Activated T-helper 1 cell treated with anti-CD3 and anti-CD28 coated beads, Interleukin-12 subunit alpha, Interleukin-12 subunit beta, Interleukin-2, Interleukin-4 antibody, amounts not matched to agents 30 ng/mL and 10 ng/mL and 1 ng/mL, durations not matched to agents 14 hours and 24 hours and 36 hours (primary cell): ENCODE measurements at regions of chr10 and their contacts with region 1.

Region 1: GRCh38 chr10:100743626-100744135 is 1.7 kb upstream of the PAX2 start:
- DNase-seq: peak; percentile 19
- H3K4me3 Mint-ChIP-seq: no peak overlapping the region
- H3K27ac Mint-ChIP-seq: peak overlapping the region; percentile 55
- H3K4me1 Mint-ChIP-seq: peaks cover 15% of the 10 kb centered on the region
- H3K27me3 Mint-ChIP-seq: peaks cover 77% of the 10 kb centered on the region

Region 2: GRCh38 chr10:100535715-100536353 is 207.8 kb before region 1 on chr10 and contains the start of gene HIF1AN:
- intact Hi-C with region 1: no loop called
- DNase-seq: peak; percentile 90
- H3K4me3 Mint-ChIP-seq: no peak within 1 kb of the TSS
- H3K27ac Mint-ChIP-seq: no peak within 1 kb of the TSS
- H3K4me1 Mint-ChIP-seq: peaks cover 16% of the 10 kb centered on the region
- H3K27me3 Mint-ChIP-seq: no peaks in the 10 kb centered on the region
- total RNA-seq, gene HIF1AN: 46.5 and 54.1 TPM in 2 replicates

Region 3: DNA sequence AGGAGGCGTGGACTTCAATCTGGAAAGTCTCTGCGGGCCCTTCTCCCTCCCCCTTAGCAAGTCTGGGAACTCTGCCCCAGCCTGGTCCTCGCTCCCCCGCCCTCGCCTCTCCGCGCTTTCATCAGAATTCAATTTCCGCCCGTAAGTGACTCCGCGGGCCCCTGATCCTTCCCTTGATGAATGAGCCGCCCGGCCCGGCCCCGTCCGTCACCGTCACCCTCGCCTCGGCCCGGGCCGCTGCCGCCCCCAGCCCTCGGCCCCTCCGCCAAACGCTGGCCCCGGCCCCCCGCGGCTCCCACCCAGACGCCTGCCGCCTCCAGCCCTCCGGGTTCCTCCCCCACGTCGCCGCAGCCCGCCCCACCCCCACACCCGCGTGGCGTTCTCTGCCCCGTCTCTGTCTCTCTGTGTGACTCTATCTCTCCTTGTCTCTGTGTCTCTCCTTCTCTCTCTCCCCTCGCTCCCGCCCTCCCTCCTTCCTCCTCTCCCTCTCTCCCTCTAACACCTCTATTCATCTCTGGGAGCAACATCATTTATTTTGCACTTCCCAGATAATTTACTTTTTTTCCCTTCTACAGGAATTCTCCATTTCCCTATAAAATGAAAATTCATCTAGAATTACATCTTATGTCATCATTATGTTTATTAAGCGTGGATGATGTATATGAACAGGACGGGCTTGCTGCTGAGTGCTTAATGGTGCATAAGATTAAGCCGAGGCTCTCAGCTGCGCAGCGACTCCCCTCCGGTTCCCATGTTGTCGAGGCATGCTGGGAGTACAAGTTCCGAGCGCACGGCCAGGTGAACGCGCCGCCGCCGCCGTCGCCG is 89.5 kb before region 1 on chr10:
- intact Hi-C with region 1: loop called (anchors 5 kb)
- DNase-seq: no peak
- H3K4me3 Mint-ChIP-seq: peak overlapping the region; percentile 57
- H3K27ac Mint-ChIP-seq: no peak overlapping the region
- H3K4me1 Mint-ChIP-seq: peaks cover 20% of the 10 kb centered on the region
- H3K27me3 Mint-ChIP-seq: peaks cover 63% of the 10 kb centered on the region

Region 4: GRCh38 chr10:100715445-100716385 is 28.0 kb before region 1 on chr10:
- intact Hi-C with region 1: loop called (anchors 2 kb)
- DNase-seq: no peak
- H3K4me3 Mint-ChIP-seq: no peak overlapping the region
- H3K27ac Mint-ChIP-seq: no peak overlapping the region
- H3K4me1 Mint-ChIP-seq: peaks cover 6% of the 10 kb centered on the region
- H3K27me3 Mint-ChIP-seq: peaks cover 81% of the 10 kb centered on the region

Region 5: GRCh38 chr10:100817268-100817839 is 73.7 kb after region 1 on chr10:
- intact Hi-C with region 1: no loop called
- DNase-seq: no peak
- H3K4me3 Mint-ChIP-seq: no peak overlapping the region
- H3K27ac Mint-ChIP-seq: no peak overlapping the region
- H3K4me1 Mint-ChIP-seq: no peaks in the 10 kb centered on the region
- H3K27me3 Mint-ChIP-seq: peaks cover 37% of the 10 kb centered on the region

Region 6: GRCh38 chr10:100827819-100828737 is 84.4 kb after region 1 on chr10:
- intact Hi-C with region 1: loop called (anchors 2 kb)
- DNase-seq: peak; percentile 19
- H3K4me3 Mint-ChIP-seq: peak overlapping the region; percentile 70
- H3K27ac Mint-ChIP-seq: no peak overlapping the region
- H3K4me1 Mint-ChIP-seq: peaks cover 11% of the 10 kb centered on the region
- H3K27me3 Mint-ChIP-seq: peaks cover 83% of the 10 kb centered on the region

Region 7: GRCh38 chr10:101228153-101228973 is 484.7 kb after region 1 on chr10:
- intact Hi-C with region 1: loop called (anchors 2 kb)
- DNase-seq: no peak
- H3K4me3 Mint-ChIP-seq: no peak overlapping the region
- H3K27ac Mint-ChIP-seq: peak overlapping the region; percentile 71
- H3K4me1 Mint-ChIP-seq: peaks cover 17% of the 10 kb centered on the region
- H3K27me3 Mint-ChIP-seq: peaks cover 76% of the 10 kb centered on the region